Testis (tissue), 5 donors: ENCODE measurements at regions of chr1 and their contacts with region 1.

Region 1: GRCh38 chr1:205325334-205325884 is 3.9 kb upstream of the NUAK2 start:
- DNase-seq: peak; percentile 78
- H3K4me3 ChIP-seq: no peak overlapping the region
- H3K27ac ChIP-seq: no peak overlapping the region
- H3K4me1 ChIP-seq: peaks cover 3% of the 10 kb centered on the region
- H3K27me3 ChIP-seq: no peaks in the 10 kb centered on the region
- CTCF ChIP-seq: peak; percentile 38 to 75 (median 65)
- POLR2A ChIP-seq: no peak

Region 2: DNA sequence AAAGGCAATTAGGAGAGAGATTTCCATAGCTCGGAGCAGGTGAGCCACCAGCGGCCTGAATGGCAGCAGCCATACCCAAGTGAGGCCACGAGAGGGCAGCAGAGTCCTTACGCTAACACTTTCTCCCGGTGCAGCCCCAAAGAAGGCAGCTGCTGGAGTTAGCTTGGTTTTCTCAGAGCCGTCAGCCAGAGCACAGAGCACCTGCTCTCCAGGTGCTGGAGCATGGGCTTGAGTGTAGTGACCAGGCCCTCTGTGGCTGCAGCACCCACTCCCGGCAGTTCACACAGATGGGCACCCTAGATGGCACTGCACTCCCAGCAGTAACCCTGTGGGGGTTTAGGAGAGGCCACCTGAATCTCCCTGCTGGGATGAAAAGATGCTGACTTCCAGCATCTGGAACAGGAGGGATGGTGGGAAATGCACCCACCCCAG is 51.8 kb before region 1 on chr1:
- intact Hi-C with region 1: loop called (anchors 5 kb)
- DNase-seq: peak; percentile 93
- H3K4me3 ChIP-seq: no peak overlapping the region
- H3K27ac ChIP-seq: no peak overlapping the region
- H3K4me1 ChIP-seq: peaks cover 17% of the 10 kb centered on the region
- H3K27me3 ChIP-seq: no peaks in the 10 kb centered on the region
- CTCF ChIP-seq: peak; percentile 95 to 97 (median 96)
- POLR2A ChIP-seq: no peak

Region 3: DNA sequence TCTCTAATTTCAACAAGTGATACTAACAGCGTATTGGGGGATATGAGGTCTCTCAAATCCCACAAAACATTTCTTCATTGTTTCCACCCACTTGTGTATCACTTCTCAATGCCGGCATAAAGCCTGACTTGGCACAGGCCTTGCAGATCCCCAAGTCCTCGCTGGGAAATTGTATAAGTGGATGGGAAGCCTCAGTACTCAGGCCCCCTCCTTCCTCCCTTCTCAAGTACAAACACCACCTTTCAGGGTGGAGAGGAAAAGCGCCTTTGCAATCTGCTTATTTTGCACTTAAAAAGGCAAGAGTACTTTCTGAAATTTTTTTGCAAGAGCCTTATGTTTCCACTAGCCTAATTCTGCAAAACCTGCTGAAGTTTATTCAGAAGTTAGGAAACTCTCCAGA is 57.2 kb after region 1 on chr1:
- intact Hi-C with region 1: no loop called
- DNase-seq: no peak
- H3K4me3 ChIP-seq: no peak overlapping the region
- H3K27ac ChIP-seq: peak overlapping the region; percentile 3 to 87
- H3K4me1 ChIP-seq: peaks cover 46% of the 10 kb centered on the region
- H3K27me3 ChIP-seq: no peaks in the 10 kb centered on the region
- CTCF ChIP-seq: no peak
- POLR2A ChIP-seq: no peak

Region 4: GRCh38 chr1:205645519-205645918 is 320.1 kb after region 1 on chr1:
- intact Hi-C with region 1: no loop called
- DNase-seq: no peak
- H3K4me3 ChIP-seq: no peak overlapping the region
- H3K27ac ChIP-seq: no peak overlapping the region
- H3K4me1 ChIP-seq: no peaks in the 10 kb centered on the region
- H3K27me3 ChIP-seq: no peaks in the 10 kb centered on the region
- CTCF ChIP-seq: no peak
- POLR2A ChIP-seq: no peak